Heart right ventricle (tissue), 16 donors: ENCODE measurements at regions of chr1 and their contacts with region 1.

Region 1: GRCh38 chr1:215825056-215825455 is 258.0 kb downstream of the KCTD3 start:
- DNase-seq: no peak
- ATAC-seq: no peak
- H3K4me3 ChIP-seq: no peak overlapping the region
- H3K27ac ChIP-seq: no peak overlapping the region
- H3K4me1 ChIP-seq: no peaks in the 10 kb centered on the region
- H3K27me3 ChIP-seq: no peaks in the 10 kb centered on the region
- CTCF ChIP-seq: no peak

Region 2: DNA sequence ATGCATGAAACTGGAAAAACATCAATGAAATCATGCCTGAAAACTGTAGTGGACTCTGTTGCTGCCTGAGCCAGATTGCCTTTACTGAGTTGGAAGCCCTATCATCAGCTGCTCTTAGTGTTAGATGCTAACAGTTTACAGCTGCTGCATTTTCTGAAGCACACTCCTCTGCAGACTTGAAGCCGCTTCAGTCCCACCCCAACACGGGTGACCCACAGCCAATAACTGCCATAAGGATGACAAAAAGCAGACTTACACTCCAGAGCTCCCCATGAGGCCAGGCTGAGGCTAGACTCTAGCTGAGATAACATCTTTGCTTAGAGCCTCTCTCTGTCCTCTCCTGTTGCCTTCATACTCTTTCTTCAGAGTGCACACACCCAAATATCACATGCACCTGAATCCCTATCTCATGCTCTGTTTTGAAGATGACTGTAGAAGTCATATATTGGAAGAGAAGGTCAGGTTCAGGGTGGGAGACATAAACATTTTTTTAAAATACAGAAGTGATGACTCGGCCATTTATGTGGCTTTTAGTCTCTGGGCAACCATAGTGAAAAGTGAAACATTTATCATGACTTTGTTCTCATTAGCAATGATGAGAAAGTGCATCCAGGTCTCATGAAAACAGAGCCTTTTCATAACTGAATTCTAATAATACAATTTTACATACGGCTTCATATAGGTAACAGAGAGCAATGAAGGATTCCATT is 581.6 kb before region 1 on chr1:
- intact Hi-C with region 1: loop called in 1 of 10 experiments (anchors 5 kb)
- DNase-seq: no peak
- ATAC-seq: no peak
- H3K4me3 ChIP-seq: no peak overlapping the region
- H3K27ac ChIP-seq: no peak overlapping the region
- H3K4me1 ChIP-seq: no peaks in the 10 kb centered on the region
- H3K27me3 ChIP-seq: no peaks in the 10 kb centered on the region
- CTCF ChIP-seq: no peak